Transverse colon (tissue), 4 donors: ENCODE measurements at regions of chr12 and their contacts with region 1.

Region 1: GRCh38 chr12:27014085-27014858 is at the start of gene TM7SF3:
- DNase-seq: peak; percentile 97
- H3K4me3 ChIP-seq: peak within 1 kb of the TSS; percentile 74 to 93 (median 81)
- H3K27ac ChIP-seq: peak within 1 kb of the TSS; percentile 92 to 96 (median 94)
- H3K4me1 ChIP-seq: peaks cover 4 to 43% (median 30%) of the 10 kb centered on the region in 4 donors
- H3K27me3 ChIP-seq: no peaks in the 10 kb centered on the region
- CTCF ChIP-seq: peak; percentile 79 to 98 (median 94)
- EP300 ChIP-seq: no peak
- POLR2A ChIP-seq: peak; percentile 56
- total RNA-seq, gene TM7SF3: 38.6 to 123 (median 47.5) TPM

Region 2: GRCh38 chr12:26783131-26783526 is 231.1 kb before region 1 on chr12:
- in situ Hi-C with region 1: no loop called
- intact Hi-C with region 1: no loop called
- DNase-seq: no peak
- H3K4me3 ChIP-seq: no peak overlapping the region
- H3K27ac ChIP-seq: no peak overlapping the region
- H3K4me1 ChIP-seq: peaks cover 0 to 14% (median 9%) of the 10 kb centered on the region in 4 donors
- H3K27me3 ChIP-seq: no peaks in the 10 kb centered on the region
- CTCF ChIP-seq: no peak
- EP300 ChIP-seq: no peak
- POLR2A ChIP-seq: no peak

Region 3: GRCh38 chr12:26832822-26833742 is 181.2 kb before region 1 on chr12 and contains the start of gene ITPR2:
- in situ Hi-C with region 1: loop called in 2 of 4 experiments (anchors 25 kb)
- intact Hi-C with region 1: no loop called
- DNase-seq: peak; percentile 97
- H3K4me3 ChIP-seq: peak within 1 kb of the TSS; percentile 55 to 98 (median 80)
- H3K27ac ChIP-seq: peak within 1 kb of the TSS; percentile 90 to 99 (median 96)
- H3K4me1 ChIP-seq: peaks cover 0 to 37% (median 9%) of the 10 kb centered on the region in 4 donors
- H3K27me3 ChIP-seq: no peaks in the 10 kb centered on the region
- CTCF ChIP-seq: peak in 1 of 5 experiments; percentile 21
- EP300 ChIP-seq: no peak
- POLR2A ChIP-seq: peak; percentile 83
- total RNA-seq, gene ITPR2: 29.8 to 60.5 (median 41.2) TPM

Region 4: GRCh38 chr12:26853303-26854030 is 160.8 kb before region 1 on chr12:
- in situ Hi-C with region 1: loop called in 2 of 4 experiments (anchors 25 kb)
- intact Hi-C with region 1: loop called (anchors 10 kb)
- DNase-seq: peak; percentile 76
- H3K4me3 ChIP-seq: no peak overlapping the region
- H3K27ac ChIP-seq: no peak overlapping the region
- H3K4me1 ChIP-seq: no peaks in the 10 kb centered on the region
- H3K27me3 ChIP-seq: no peaks in the 10 kb centered on the region
- CTCF ChIP-seq: peak; percentile 80 to 88 (median 84)
- EP300 ChIP-seq: no peak
- POLR2A ChIP-seq: no peak

Region 5: DNA sequence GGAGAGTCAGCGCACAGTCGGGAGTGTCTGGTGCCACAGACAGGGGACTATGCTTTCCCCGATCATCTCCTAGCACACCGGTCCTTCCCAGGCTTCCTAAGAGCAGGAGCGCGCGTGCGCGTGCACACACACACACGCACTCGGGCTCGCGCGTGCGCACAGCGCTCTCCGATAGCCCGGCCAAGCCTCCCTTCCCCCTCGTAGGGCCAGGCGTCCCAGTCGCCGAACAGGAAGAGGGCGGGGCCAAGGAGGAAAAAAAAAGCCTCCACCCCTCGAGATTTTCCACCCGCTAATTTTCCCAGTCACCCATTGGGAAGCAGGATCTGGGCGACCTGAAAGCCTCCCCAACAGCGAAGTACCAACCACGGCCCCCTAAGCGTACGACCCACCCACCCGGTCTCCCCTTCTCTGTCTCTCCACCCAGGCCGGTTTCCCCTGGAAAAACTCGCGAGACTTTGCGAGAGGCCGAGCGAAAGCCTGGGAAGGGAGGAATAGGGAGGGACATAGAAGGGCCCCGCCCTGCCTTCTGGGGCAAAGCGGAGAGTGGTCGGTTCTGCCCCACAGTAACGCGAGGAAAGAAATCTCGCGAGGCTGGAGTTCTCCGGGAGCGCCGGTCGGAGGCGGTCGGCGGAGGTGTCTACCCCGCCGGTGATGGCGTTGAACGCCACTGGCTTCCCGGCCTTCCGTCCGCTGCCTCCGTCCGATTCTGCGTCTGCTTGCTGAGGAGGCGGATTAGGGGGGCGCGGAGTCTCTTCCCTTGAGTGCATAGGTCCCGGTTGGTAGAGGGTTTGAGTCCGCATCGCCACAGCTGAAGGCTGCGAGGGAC is 76.2 kb before region 1 on chr12 and contains the starts of genes FGFR1OP2 and INTS13:
- in situ Hi-C with region 1: no loop called
- intact Hi-C with region 1: loop called (anchors 5 kb)
- DNase-seq: peak; percentile 99
- H3K4me3 ChIP-seq: peak within 1 kb of the TSS; percentile 65 to 88 (median 76)
- H3K27ac ChIP-seq: peak within 1 kb of the TSS; percentile 93 to 97 (median 94)
- H3K4me1 ChIP-seq: peaks cover 6 to 53% (median 40%) of the 10 kb centered on the region in 4 donors
- H3K27me3 ChIP-seq: no peaks in the 10 kb centered on the region
- CTCF ChIP-seq: no peak
- EP300 ChIP-seq: peak; percentile 7
- POLR2A ChIP-seq: peak; percentile 97
- total RNA-seq, gene FGFR1OP2: 13.7 to 85.4 (median 43.9) TPM
- total RNA-seq, gene INTS13: 6.4 to 120 (median 15.7) TPM

Region 6: GRCh38 chr12:27305673-27306456 is 291.6 kb after region 1 on chr12:
- in situ Hi-C with region 1: no loop called
- intact Hi-C with region 1: loop called (anchors 10 kb)
- DNase-seq: no peak
- H3K4me3 ChIP-seq: no peak overlapping the region
- H3K27ac ChIP-seq: peak overlapping the region; percentile 30 to 49 (median 42)
- H3K4me1 ChIP-seq: peaks cover 0 to 22% (median 3%) of the 10 kb centered on the region in 4 donors
- H3K27me3 ChIP-seq: no peaks in the 10 kb centered on the region
- CTCF ChIP-seq: peak; percentile 50 to 69 (median 52)
- EP300 ChIP-seq: no peak
- POLR2A ChIP-seq: no peak